BJ (cell line): ENCODE measurements at regions of chr16 and their contacts with region 1.

Region 1: GRCh38 chr16:51146256-51146924 is 4.7 kb downstream of the SALL1 start:
- DNase-seq: no peak
- H3K4me3 ChIP-seq: 0 out of 2 replicates have a peak overlapping the region, but pooled peaks have one; percentile 0
- H3K27me3 ChIP-seq: no peaks in the 10 kb centered on the region
- CTCF ChIP-seq: peak; percentile 60

Region 2: DNA sequence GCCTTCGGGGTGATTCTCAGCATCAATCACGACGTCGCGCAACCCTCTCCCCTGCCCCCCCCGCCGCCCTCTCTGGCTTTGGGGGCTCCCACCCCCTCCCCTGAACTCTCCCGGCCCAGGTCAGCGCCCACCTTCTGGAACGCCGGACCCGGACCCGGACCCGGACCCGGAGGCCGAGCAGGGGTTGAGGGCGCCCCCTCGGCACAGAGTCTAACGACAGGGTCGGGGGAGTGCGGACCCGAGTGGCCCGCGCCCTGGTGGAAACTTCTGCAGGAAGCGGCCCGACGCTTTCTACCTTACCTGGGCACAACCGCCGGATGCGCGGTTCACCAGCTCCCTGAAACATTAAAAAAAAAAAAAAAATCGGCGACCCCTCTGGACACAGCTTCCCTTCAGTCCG is 11.5 kb before region 1 on chr16:
- CTCF ChIA-PET with region 1: no interaction called
- POLR2A ChIA-PET with region 1: no interaction called
- DNase-seq: no peak
- H3K4me3 ChIP-seq: no peak overlapping the region
- H3K27me3 ChIP-seq: no peaks in the 10 kb centered on the region
- CTCF ChIP-seq: no peak

Region 3: GRCh38 chr16:51231702-51232101 is 85.3 kb after region 1 on chr16:
- CTCF ChIA-PET with region 1: no interaction called
- POLR2A ChIA-PET with region 1: no interaction called
- DNase-seq: no peak
- H3K4me3 ChIP-seq: no peak overlapping the region
- H3K27me3 ChIP-seq: no peaks in the 10 kb centered on the region
- CTCF ChIP-seq: no peak

Region 4: DNA sequence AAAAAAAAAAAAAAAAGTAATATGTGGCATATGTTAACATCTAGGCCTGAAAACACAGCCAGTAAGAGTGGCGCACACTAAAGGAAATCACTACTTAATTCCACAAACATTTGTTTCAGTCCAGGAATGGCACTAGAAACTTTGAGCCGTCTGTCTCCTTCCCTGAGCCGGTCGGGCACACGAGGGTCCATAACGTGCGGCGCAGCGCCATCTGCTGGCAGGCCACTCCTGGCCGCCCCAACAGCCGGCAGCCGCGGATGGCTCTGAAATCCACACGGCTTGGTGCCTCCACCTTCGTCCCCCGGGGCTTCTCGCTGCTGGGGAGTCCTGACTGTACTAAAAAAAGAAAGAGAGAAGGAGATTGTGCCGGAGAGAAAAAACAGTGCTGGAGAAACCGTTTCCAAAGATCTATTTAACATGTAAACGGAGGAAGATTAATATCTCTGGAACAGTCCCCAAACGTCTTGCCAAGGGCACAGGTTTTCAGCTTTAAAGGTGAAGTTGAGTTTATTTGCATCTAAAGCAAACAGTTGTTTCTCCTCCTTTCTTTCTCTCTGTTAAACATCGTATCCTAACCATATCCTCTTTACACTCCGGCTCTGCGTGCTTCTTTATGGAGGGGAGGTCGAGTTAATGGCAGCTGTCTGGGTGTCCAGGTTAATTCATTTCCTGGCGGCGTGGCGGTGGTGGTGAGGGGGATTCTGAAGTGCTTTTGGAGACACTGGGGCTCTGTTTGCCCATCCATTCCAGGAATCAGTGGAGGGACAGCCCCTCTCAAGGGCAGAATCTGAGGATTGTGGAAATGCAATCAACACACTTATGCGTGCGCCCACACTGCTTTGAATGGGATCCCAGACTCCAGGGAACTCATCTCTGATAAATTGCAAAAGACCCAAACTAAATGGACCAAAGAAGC is 615.9 kb after region 1 on chr16:
- CTCF ChIA-PET with region 1: interaction called, 10 read pairs
- POLR2A ChIA-PET with region 1: no interaction called
- DNase-seq: peak; percentile 2
- H3K4me3 ChIP-seq: no peak overlapping the region
- H3K27me3 ChIP-seq: no peaks in the 10 kb centered on the region; the same call in 1 of the 2 replicates
- CTCF ChIP-seq: peak; percentile 97